Calu3 (cell line): ENCODE measurements at regions of chr3 and their contacts with region 1.

Region 1: DNA sequence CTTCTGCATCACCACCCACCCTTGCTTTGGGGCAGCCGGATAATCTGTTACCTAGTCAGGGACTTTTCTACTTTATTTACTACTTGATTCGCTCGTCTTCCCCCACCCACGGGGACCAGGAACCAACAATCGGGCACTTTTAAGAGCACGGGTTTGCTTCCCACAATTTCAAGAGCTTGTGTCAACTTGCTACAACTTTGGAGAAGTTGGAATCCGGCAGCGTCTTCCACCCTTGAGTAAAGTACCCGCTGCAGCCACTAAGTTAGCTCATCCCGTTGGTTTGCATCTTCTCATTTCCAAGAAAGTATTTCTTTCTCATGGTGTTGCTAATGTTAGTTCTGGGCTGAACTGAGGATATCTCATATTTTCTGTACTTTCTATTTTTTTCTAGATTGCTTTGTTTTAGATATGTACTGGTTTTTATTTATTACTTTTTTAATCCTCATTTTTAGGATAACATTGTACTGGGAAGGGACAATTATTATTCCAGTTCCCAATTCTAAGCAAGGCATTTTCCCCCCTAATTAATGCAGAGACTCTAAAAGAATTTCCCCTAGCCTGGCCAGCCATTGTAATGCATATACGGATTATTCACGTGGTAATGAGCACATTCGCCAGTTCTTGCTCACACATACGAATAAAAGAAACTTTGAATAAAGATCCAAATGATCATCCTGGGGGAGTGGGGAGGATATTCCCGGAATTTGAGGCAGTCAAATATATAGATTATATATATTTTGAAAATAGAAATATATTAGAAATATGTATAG is 4.0 kb downstream of the SOX2 start:
- DNase-seq: no peak
- H3K4me3 Mint-ChIP-seq: no peak overlapping the region
- H3K27ac Mint-ChIP-seq: no peak overlapping the region
- H3K4me1 Mint-ChIP-seq: peaks cover 25% of the 10 kb centered on the region
- H3K27me3 Mint-ChIP-seq: peaks cover 30% of the 10 kb centered on the region
- CTCF ChIP-seq: no peak

Region 2: DNA sequence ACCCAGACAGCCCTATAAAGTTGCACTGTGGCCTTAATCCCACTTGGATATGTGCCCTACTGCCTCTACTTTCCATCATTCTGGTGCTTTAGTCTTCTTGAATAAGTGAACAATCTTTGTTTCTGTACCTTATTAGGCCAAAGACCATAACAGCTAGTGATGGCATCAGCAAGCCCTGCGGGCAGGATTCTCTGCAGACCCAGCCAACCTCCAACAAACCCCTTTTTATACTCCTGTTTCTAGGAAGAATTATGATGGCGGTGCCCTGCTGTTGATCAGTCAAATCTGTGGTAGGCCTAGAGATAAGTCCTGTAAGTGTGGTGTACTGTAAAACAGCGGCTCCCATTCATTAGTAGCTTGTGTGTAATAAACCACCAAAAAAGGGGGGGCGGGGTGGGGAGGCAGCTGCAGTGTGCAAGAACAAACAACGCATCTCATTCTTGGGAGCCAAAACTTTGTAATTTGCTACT is 36.5 kb after region 1 on chr3:
- CTCF ChIA-PET with region 1: no interaction called
- intact Hi-C with region 1: no loop called
- DNase-seq: no peak
- H3K4me3 Mint-ChIP-seq: no peak overlapping the region
- H3K27ac Mint-ChIP-seq: no peak overlapping the region
- H3K4me1 Mint-ChIP-seq: no peaks in the 10 kb centered on the region
- H3K27me3 Mint-ChIP-seq: no peaks in the 10 kb centered on the region
- CTCF ChIP-seq: no peak

Region 3: DNA sequence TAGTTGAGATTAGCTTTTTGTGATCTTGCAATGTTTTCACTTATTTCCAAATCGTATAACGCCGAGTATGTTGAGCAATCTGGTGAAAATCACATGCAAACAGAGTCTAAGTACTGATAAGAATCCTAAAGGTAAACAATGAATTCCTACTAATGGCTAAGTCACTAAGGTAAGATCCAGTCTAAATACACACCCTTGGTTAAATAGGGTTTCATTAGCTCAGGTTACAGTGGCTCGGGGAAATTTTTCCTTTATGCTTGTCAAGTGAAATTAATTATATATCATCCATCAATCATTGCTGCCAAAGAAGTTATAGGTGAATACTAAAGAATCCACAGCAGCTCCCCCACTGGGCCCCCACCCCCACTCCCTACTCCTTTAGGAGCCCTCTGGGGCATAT is 135.3 kb after region 1 on chr3:
- CTCF ChIA-PET with region 1: interaction called, 3 read pairs
- intact Hi-C with region 1: loop called (anchors 2 kb)
- DNase-seq: peak; percentile 37
- H3K4me3 Mint-ChIP-seq: peak overlapping the region; percentile 13
- H3K27ac Mint-ChIP-seq: peak overlapping the region; percentile 58
- H3K4me1 Mint-ChIP-seq: peaks cover 37% of the 10 kb centered on the region
- H3K27me3 Mint-ChIP-seq: no peaks in the 10 kb centered on the region
- CTCF ChIP-seq: no peak